ENCODE measurements at regions of chr14 and their contacts with region 1.

Region 1: DNA sequence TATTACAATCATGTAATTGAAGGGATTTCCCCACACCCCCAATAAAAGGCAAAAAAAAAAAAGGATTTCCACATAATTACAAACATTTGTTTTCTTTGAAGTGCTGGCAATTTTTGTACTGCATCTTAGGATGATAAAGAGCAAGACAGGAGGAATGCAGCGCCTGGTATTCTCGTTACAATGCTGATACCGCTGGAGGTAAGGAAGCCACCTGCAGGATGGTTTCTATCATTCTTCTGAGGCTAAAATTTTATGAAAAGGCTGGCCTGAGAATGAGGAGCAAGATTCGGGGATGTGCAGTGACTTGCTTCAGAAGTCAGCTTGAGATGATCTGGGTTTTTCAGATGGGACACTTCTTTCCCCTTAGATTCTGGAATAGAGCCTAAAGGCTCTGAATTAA is 134.8 kb downstream of the TTC7B start:
- DNase-seq: no peak
- H3K4me3 ChIP-seq: no peak overlapping the region
- H3K27ac ChIP-seq: no peak overlapping the region
- H3K4me1 ChIP-seq: peaks cover 0 to 17% (median 9%) of the 10 kb centered on the region in 4 experiments
- H3K27me3 ChIP-seq: no peaks in the 10 kb centered on the region

Region 2: GRCh38 chr14:90697577-90698206 is 16.3 kb after region 1 on chr14:
- CTCF ChIA-PET with region 1: interaction called, 10 read pairs
- POLR2A ChIA-PET with region 1: no interaction called
- DNase-seq: peak; percentile 65 to 78 (median 77)
- H3K4me3 ChIP-seq: peak overlapping the region in 1 of 7 experiments; percentile 40
- H3K27ac ChIP-seq: no peak overlapping the region
- H3K4me1 ChIP-seq: peaks cover 0 to 25% (median 17%) of the 10 kb centered on the region in 4 experiments
- H3K27me3 ChIP-seq: no peaks in the 10 kb centered on the region

Region 3: GRCh38 chr14:90805662-90806540 is 124.5 kb after region 1 on chr14:
- CTCF ChIA-PET with region 1: no interaction called
- POLR2A ChIA-PET with region 1: no interaction called
- DNase-seq: peak in 1 of 3 donors; percentile 36
- H3K4me3 ChIP-seq: no peak overlapping the region
- H3K27ac ChIP-seq: no peak overlapping the region
- H3K4me1 ChIP-seq: peaks cover 0 to 86% (median 68%) of the 10 kb centered on the region in 4 experiments
- H3K27me3 ChIP-seq: no peaks in the 10 kb centered on the region

Region 4: GRCh38 chr14:90871605-90872233 is 190.3 kb after region 1 on chr14:
- CTCF ChIA-PET with region 1: no interaction called
- POLR2A ChIA-PET with region 1: no interaction called
- DNase-seq: peak in 2 of 3 donors; percentile 46 to 59
- H3K4me3 ChIP-seq: no peak overlapping the region
- H3K27ac ChIP-seq: no peak overlapping the region
- H3K4me1 ChIP-seq: no peaks in the 10 kb centered on the region
- H3K27me3 ChIP-seq: no peaks in the 10 kb centered on the region